Activated naive CD4-positive, alpha-beta T cell treated with anti-CD3 and anti-CD28 coated beads, Interleukin-2, amount 10 ng/mL, durations not matched to agents 7 days and 5 days (primary cell): ENCODE measurements at regions of chr7 and their contacts with region 1.

Region 1: DNA sequence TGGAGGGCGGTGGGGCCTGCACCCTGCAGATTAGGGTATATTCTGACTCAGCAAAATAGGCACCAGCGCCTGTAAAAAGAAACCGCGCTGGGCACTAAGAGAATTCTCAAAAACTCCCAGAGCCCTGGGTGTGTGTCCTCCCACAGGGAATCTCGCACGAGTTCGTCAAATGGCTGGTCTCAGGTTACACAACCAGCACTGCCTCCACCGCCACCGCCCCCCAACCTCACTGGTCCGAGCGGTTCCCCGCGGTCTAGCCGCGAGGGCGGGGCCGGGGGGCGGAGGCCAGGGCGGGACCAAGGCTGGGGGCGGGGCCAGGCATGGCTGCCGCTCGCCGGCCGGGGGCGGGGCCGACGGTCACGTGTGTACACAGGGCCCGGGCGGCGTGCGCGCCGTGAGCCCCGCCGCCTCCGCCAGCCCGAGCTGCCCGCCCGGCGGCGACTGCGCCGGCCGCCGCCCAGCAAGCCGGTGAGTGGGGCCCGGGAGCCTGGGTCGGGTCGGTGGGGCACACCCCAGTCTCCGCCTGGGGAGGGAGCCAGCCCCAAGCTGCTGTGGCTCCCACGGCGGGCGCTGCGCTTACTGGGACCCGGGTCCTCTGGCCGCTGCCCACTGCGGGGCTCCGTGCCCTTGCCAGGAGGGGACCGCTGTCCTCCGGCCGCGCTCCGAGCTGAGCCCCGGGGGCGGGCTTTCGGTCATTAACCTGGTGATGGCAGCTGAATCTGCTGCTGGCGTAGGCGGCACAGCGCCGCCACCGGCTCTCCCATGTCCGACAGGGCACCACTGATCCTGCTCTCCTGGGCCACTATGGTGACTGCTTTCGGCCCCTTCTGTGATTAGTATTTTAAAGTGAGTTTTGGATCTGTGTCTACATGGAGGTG is at the start of gene GPR146:
- DNase-seq: peak; percentile 93
- H3K4me3 Mint-ChIP-seq: peak within 1 kb of the TSS; percentile 84
- H3K27ac Mint-ChIP-seq: peak within 1 kb of the TSS; percentile 86
- H3K4me1 Mint-ChIP-seq: peaks cover 69% of the 10 kb centered on the region
- H3K27me3 Mint-ChIP-seq: no peaks in the 10 kb centered on the region

Region 2: DNA sequence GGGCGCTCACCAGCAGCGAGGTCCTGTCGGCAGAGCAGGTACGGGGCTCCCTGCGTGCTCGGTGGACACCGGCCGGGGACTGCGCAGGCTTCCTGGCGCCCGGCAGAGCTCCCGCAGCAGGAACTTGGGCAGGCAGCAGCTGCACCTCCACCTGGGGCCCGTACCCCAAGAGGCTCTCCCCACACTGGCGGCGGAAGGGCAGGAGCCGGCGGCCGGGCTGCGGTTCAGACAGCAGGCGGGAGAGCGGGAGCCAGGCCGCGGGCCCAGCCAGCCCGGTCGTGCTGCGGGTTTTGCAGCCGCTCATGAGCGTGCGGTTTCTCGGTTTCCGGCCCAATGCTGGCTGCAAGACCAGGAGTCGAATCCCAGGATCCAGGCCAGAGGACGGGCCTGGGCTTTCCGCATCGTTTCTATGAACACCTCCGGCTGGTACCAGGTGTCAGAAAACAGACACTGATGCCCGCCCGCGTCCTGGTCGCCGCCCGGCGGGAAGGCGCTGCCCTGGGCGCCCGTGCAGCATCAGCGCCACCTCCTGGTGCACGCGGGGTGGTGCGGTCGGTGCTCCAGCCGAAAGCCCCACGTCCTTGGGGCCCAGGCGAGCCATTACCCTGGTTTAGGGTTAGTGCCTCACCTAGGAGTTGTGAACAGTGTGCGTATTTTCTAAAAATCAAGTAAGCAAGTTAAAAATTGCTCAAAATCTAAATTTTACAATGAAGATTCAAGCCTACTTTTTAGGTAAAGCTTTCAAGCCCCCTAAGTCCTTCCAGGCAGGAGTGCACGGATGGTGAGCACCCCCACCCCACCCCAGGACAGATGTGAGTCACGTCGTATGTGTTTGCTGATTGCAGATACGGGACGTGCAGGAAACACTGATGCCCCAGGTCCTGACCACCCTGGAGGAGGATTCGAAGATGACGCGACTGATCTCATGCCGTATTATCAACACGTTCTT is 270.0 kb before region 1 on chr7:
- CTCF ChIA-PET with region 1: no interaction called
- DNase-seq: peak; percentile 70
- H3K4me3 Mint-ChIP-seq: no peak overlapping the region
- H3K27ac Mint-ChIP-seq: no peak overlapping the region
- H3K4me1 Mint-ChIP-seq: no peaks in the 10 kb centered on the region
- H3K27me3 Mint-ChIP-seq: no peaks in the 10 kb centered on the region

Region 3: GRCh38 chr7:945556-946255 is 98.7 kb before region 1 on chr7:
- CTCF ChIA-PET with region 1: no interaction called
- DNase-seq: no peak
- H3K4me3 Mint-ChIP-seq: no peak overlapping the region
- H3K27ac Mint-ChIP-seq: no peak overlapping the region
- H3K4me1 Mint-ChIP-seq: no peaks in the 10 kb centered on the region
- H3K27me3 Mint-ChIP-seq: peaks cover 20% of the 10 kb centered on the region

Region 4: GRCh38 chr7:1059200-1060091 is 15.0 kb after region 1 on chr7:
- CTCF ChIA-PET with region 1: interaction called, 19 read pairs
- DNase-seq: no peak
- H3K4me3 Mint-ChIP-seq: no peak overlapping the region
- H3K27ac Mint-ChIP-seq: peak overlapping the region; percentile 58
- H3K4me1 Mint-ChIP-seq: peaks cover 33% of the 10 kb centered on the region
- H3K27me3 Mint-ChIP-seq: peaks cover 25% of the 10 kb centered on the region

Region 5: DNA sequence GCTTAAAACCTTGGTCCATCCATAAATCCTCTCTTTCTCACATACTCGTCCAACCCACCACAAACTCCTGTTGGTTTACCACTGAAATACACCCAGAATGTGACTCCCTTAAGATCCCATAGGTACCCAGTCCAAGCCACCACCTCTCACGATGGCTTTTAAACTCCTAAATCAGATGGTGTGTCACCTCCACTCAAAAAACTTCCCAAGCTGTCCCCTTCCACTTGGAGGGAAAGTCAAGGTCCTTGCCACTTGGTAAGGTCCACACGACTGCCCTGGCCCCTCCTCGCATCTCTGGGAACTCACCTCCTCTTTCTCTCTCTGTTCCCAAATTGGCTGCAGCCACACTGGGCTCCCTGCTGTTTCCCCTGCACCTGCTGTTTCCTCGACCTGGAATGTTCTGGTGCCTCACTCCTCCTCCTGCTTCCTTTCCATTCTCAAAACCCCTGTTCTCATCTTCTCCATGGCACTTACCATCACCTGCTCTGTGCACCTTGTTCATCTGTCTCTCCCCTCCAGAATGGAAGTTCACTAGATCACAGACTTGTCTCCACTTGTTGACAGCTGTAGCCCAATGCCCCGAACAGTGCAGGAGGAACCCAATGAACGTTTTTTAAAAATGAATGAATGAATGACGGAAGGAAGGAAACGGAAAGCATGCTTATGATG is 92.5 kb after region 1 on chr7:
- CTCF ChIA-PET with region 1: no interaction called
- DNase-seq: no peak
- H3K4me3 Mint-ChIP-seq: peak overlapping the region; percentile 76
- H3K27ac Mint-ChIP-seq: peak overlapping the region; percentile 83
- H3K4me1 Mint-ChIP-seq: peaks cover 16% of the 10 kb centered on the region
- H3K27me3 Mint-ChIP-seq: no peaks in the 10 kb centered on the region